Mammary epithelial cell (primary cell): ENCODE measurements at regions of chr18 and their contacts with region 1.

Region 1: GRCh38 chr18:11488175-11488574 is 121.2 kb upstream of the SLC35G4 start:
- DNase-seq: peak; percentile 63
- H3K4me3 ChIP-seq: no peak overlapping the region
- H3K27ac ChIP-seq: no peak overlapping the region
- H3K4me1 ChIP-seq: peaks cover 17% of the 10 kb centered on the region
- H3K27me3 ChIP-seq: no peaks in the 10 kb centered on the region
- CTCF ChIP-seq: no peak

Region 2: GRCh38 chr18:11500153-11501122 is 12.3 kb after region 1 on chr18:
- CTCF ChIA-PET with region 1: no interaction called
- dilution Hi-C with region 1: no loop called
- in situ Hi-C with region 1: no loop called
- intact Hi-C with region 1: loop called (anchors 1 kb)
- DNase-seq: peak; percentile 98
- H3K4me3 ChIP-seq: no peak overlapping the region
- H3K27ac ChIP-seq: peak overlapping the region; percentile 69
- H3K4me1 ChIP-seq: peaks cover 35% of the 10 kb centered on the region
- H3K27me3 ChIP-seq: no peaks in the 10 kb centered on the region
- CTCF ChIP-seq: no peak

Region 3: GRCh38 chr18:12973562-12974213 is 1485.5 kb after region 1 on chr18:
- CTCF ChIA-PET with region 1: interaction called, 17 read pairs
- dilution Hi-C with region 1: no loop called
- in situ Hi-C with region 1: no loop called
- intact Hi-C with region 1: no loop called
- DNase-seq: peak; percentile 26
- H3K4me3 ChIP-seq: no peak overlapping the region
- H3K27ac ChIP-seq: no peak overlapping the region
- H3K4me1 ChIP-seq: no peaks in the 10 kb centered on the region
- H3K27me3 ChIP-seq: no peaks in the 10 kb centered on the region
- CTCF ChIP-seq: no peak